ENCODE measurements at regions of chr1 and their contacts with region 1.

Region 1: DNA sequence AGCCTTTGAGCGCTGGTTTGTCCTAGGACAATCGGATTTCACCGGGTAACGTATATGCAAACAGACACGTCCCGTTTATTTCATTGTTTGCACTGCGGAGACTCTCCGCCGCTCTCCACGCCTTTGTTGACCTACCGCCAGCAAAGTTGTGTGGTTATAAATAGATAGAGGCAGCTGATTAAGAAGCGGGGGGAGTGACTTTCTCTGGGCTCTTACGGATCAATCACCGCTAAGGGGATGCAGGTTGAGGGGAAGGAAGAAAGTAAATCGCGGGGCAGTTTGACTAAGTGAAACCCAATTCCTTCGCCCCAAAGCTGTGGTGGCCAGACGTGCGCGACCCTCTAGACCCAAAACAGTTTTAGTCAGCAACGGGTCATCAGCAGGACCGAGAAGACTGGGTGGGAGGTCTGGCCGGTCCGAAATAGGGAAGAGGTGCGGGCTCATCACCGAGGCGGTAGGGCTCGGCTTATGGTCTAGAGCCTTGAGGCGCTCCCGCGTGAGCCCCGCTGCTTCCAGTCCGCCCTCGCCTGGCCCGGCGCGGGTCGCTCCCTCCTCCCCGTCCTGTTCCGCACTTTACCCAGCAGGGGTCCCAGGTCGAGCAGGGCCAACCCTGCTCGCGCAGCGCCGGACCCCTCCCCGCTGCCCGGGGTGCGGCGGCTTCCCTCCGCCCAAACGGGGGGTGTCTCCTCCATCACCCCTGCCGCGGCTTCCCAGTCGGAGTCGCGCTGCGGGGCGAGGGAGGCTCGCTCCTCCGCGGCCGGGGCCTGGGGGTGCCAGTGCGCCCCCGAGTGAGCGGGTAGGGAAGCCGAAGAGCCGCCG is 120.8 kb upstream of the RRP15 start:
- DNase-seq: peak; percentile 40 to 71 (median 60)
- ATAC-seq: peak; percentile 85 to 89 (median 87)
- H3K4me3 ChIP-seq: peak overlapping the region; percentile 44 to 66 (median 58)
- H3K27ac ChIP-seq: peak overlapping the region; percentile 80 to 92 (median 87)
- H3K4me1 ChIP-seq: peaks cover 0 to 18% (median 2%) of the 10 kb centered on the region in 12 donors
- H3K27me3 ChIP-seq: peaks cover 6 to 90% (median 49%) of the 10 kb centered on the region in 9 donors
- CTCF ChIP-seq: peak in 3 of 12 donors; percentile 8 to 17 (median 13)
- POLR2A ChIP-seq: no peak

Region 2: GRCh38 chr1:217896490-217896889 is 267.8 kb before region 1 on chr1:
- intact Hi-C with region 1: loop called in 2 of 10 experiments (anchors 10 kb)
- DNase-seq: no peak
- ATAC-seq: peak in 1 of 4 donors; percentile 16
- H3K4me3 ChIP-seq: no peak overlapping the region
- H3K27ac ChIP-seq: no peak overlapping the region
- H3K4me1 ChIP-seq: peaks cover 0 to 5% (median 0%) of the 10 kb centered on the region in 12 donors
- H3K27me3 ChIP-seq: no peaks in the 10 kb centered on the region
- CTCF ChIP-seq: no peak
- POLR2A ChIP-seq: no peak

Region 3: GRCh38 chr1:218200979-218201378 is 36.7 kb after region 1 on chr1:
- intact Hi-C with region 1: loop called in 1 of 10 experiments (anchors 2 kb)
- DNase-seq: no peak
- ATAC-seq: no peak
- H3K4me3 ChIP-seq: no peak overlapping the region
- H3K27ac ChIP-seq: no peak overlapping the region
- H3K4me1 ChIP-seq: no peaks in the 10 kb centered on the region
- H3K27me3 ChIP-seq: peaks cover 0 to 11% (median 0%) of the 10 kb centered on the region in 9 donors
- CTCF ChIP-seq: no peak
- POLR2A ChIP-seq: no peak